CD8-positive, alpha-beta memory T cell (primary cell): ENCODE measurements at regions of chr18 and their contacts with region 1.

Region 1: DNA sequence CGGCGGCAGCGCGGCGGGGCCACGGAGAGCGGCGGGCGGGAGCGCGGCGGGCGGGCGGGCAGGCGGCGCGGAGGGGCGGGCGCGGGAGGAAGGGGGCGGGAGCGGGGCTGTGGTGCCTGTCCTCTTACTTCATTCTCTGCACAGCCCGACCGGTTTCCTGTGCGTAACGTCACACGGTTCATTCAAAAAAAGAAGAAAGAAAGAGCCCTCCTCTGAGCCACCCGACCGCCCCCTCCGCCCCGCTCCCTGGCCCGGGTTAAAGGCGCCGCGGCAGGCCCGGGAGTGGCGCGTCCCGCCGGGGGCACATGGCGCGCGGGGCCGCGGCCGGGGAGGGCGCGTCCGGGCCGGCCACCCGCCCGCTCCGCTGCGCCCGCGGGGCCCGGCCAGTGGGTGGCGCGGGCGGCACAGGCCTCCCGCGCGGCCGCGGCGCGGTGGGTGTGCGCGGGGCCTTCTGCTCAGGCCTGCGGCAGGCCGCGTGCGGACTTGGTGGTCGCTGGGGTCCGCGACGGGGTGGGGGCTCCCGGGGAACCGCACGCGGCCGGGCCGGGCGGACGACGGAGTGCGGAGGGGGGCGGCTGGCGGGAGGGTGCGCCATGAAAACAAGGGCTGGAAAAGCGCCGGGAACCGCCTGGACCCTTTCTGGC is 599 bp upstream of the BCL2 start:
- DNase-seq: peak; percentile 81 to 93 (median 89)
- H3K4me3 ChIP-seq: peak overlapping the region; percentile 34
- H3K4me3 Mint-ChIP-seq: peak overlapping the region; percentile 87 to 99 (median 92)
- H3K27ac ChIP-seq: no peak overlapping the region
- H3K27ac Mint-ChIP-seq: peak overlapping the region; percentile 65 to 95 (median 90)
- H3K4me1 ChIP-seq: peaks cover 13% of the 10 kb centered on the region
- H3K4me1 Mint-ChIP-seq: peaks cover 30 to 56% (median 54%) of the 10 kb centered on the region in 3 donors
- H3K27me3 ChIP-seq: no peaks in the 10 kb centered on the region
- H3K27me3 Mint-ChIP-seq: no peaks in the 10 kb centered on the region

Region 2: DNA sequence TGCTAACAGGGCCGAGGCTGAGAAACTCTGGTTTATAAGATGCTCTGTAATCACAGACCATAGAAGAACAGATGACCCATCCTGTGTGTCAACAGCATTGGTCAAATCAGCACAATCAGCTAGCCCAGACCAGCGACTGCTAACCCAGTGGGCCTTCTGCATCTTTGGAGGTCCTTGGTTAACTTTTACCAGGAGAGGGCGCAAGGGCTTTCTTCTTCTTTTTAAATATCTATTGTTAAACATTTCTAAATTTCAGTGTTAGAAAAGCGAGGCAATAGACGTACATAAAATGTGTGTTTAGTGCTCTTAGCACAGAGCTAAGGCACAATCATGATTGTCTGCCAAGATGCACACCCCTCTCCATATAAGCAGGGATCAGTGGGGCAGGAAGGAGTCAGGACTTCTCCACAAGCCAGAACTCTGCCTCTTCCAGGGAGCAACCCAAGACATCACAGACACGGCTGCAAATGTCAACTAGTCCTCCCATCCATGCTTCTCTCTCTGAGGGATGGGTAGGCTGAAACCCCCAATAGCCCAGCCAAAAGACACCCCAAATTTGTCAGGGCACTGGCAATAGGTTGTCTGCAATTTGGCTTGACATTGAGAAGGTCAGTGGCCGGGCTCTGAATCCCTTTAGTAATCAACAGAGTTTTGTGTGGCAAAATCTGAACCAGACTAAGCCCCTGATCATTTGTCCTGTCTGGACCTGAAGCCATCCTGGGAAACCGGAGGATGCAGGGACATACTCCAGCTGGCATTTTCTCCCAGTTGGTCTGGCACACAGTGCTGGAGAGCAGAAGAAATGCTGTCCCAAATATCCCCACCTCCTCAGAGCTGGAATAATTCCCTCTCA is 188.8 kb before region 1 on chr18:
- CTCF ChIA-PET with region 1: interaction called, 86 read pairs
- POLR2A ChIA-PET with region 1: interaction called, 9 read pairs
- DNase-seq: peak; percentile 35 to 69 (median 52)
- H3K4me3 ChIP-seq: no peak overlapping the region
- H3K4me3 Mint-ChIP-seq: no peak overlapping the region
- H3K27ac ChIP-seq: no peak overlapping the region
- H3K27ac Mint-ChIP-seq: peak overlapping the region; percentile 53 to 93 (median 88)
- H3K4me1 ChIP-seq: peaks cover 25% of the 10 kb centered on the region
- H3K4me1 Mint-ChIP-seq: peaks cover 29 to 35% (median 34%) of the 10 kb centered on the region in 3 donors
- H3K27me3 ChIP-seq: no peaks in the 10 kb centered on the region
- H3K27me3 Mint-ChIP-seq: peaks cover 0 to 2% of the 10 kb centered on the region in 2 donors

Region 3: DNA sequence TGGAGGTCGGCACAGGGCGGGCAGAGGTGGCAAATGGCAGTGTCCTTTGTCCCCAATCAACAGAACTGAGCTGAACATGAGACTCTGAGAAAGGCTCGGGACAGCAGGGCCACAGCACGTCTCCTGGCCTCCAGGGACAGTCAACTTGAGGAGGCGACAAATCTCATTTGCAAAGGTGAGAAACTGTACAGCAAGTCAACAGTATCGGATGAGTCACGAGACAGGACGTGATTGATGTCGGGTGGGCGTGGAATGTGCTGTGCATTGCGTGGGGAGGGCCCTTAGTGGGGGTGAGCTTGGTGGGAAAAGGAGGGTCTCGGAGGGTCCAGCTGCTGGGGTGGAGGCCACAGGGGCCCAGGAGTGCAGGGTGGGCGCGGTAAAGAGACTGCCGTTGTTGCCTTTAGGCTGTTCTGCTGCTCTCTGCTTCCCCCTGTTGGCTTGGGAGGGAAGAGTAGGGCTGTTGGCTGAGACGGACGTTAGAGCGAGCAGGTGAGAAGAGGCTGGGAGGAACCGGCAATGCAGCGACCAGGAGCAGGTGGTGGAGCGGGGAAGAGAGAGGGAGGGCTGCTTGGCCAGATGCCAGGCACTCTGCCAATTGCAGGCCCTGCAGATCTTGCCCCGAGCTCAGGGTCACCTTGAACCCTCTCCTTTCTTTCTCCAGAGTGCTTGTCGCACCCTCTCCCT is 164.9 kb before region 1 on chr18:
- CTCF ChIA-PET with region 1: interaction called, 144 read pairs
- POLR2A ChIA-PET with region 1: interaction called, 21 read pairs
- DNase-seq: peak; percentile 68 to 90 (median 82)
- H3K4me3 ChIP-seq: peak overlapping the region; percentile 69
- H3K4me3 Mint-ChIP-seq: peak overlapping the region; percentile 77 to 92 (median 85)
- H3K27ac ChIP-seq: peak overlapping the region; percentile 68
- H3K27ac Mint-ChIP-seq: peak overlapping the region; percentile 92 to 99 (median 96)
- H3K4me1 ChIP-seq: peaks cover 97% of the 10 kb centered on the region
- H3K4me1 Mint-ChIP-seq: peaks cover 96 to 100% (median 100%) of the 10 kb centered on the region in 3 donors
- H3K27me3 ChIP-seq: no peaks in the 10 kb centered on the region
- H3K27me3 Mint-ChIP-seq: no peaks in the 10 kb centered on the region

Region 4: GRCh38 chr18:63206433-63207142 is 113.6 kb before region 1 on chr18:
- CTCF ChIA-PET with region 1: interaction called, 19 read pairs
- POLR2A ChIA-PET with region 1: interaction called, 4 read pairs
- DNase-seq: no peak
- H3K4me3 ChIP-seq: peak overlapping the region; percentile 52
- H3K4me3 Mint-ChIP-seq: peak overlapping the region; percentile 56 to 87 (median 75)
- H3K27ac ChIP-seq: no peak overlapping the region
- H3K27ac Mint-ChIP-seq: peak overlapping the region; percentile 80 to 90 (median 83)
- H3K4me1 ChIP-seq: peaks cover 94% of the 10 kb centered on the region
- H3K4me1 Mint-ChIP-seq: peaks cover 86 to 94% (median 94%) of the 10 kb centered on the region in 3 donors
- H3K27me3 ChIP-seq: no peaks in the 10 kb centered on the region
- H3K27me3 Mint-ChIP-seq: no peaks in the 10 kb centered on the region

Region 5: GRCh38 chr18:63284827-63285733 is 35.1 kb before region 1 on chr18:
- CTCF ChIA-PET with region 1: interaction called, 25 read pairs
- POLR2A ChIA-PET with region 1: no interaction called
- DNase-seq: no peak
- H3K4me3 ChIP-seq: no peak overlapping the region
- H3K4me3 Mint-ChIP-seq: peak overlapping the region in 1 of 7 donors; percentile 13
- H3K27ac ChIP-seq: no peak overlapping the region
- H3K27ac Mint-ChIP-seq: peak overlapping the region in 4 of 8 donors; percentile 7 to 84 (median 35)
- H3K4me1 ChIP-seq: peaks cover 71% of the 10 kb centered on the region
- H3K4me1 Mint-ChIP-seq: peaks cover 26 to 30% (median 28%) of the 10 kb centered on the region in 3 donors
- H3K27me3 ChIP-seq: no peaks in the 10 kb centered on the region
- H3K27me3 Mint-ChIP-seq: no peaks in the 10 kb centered on the region

Region 6: GRCh38 chr18:63307551-63308200 is 12.5 kb before region 1 on chr18:
- CTCF ChIA-PET with region 1: interaction called, 58 read pairs
- POLR2A ChIA-PET with region 1: interaction called, 9 read pairs
- DNase-seq: no peak
- H3K4me3 ChIP-seq: no peak overlapping the region
- H3K4me3 Mint-ChIP-seq: peak overlapping the region in 2 of 7 donors; percentile 20 to 47
- H3K27ac ChIP-seq: no peak overlapping the region
- H3K27ac Mint-ChIP-seq: peak overlapping the region; percentile 21 to 93 (median 70)
- H3K4me1 ChIP-seq: peaks cover 60% of the 10 kb centered on the region
- H3K4me1 Mint-ChIP-seq: peaks cover 74 to 96% (median 89%) of the 10 kb centered on the region in 3 donors
- H3K27me3 ChIP-seq: no peaks in the 10 kb centered on the region
- H3K27me3 Mint-ChIP-seq: no peaks in the 10 kb centered on the region